ENCODE measurements at regions of chr17 and their contacts with region 1.

Region 1: DNA sequence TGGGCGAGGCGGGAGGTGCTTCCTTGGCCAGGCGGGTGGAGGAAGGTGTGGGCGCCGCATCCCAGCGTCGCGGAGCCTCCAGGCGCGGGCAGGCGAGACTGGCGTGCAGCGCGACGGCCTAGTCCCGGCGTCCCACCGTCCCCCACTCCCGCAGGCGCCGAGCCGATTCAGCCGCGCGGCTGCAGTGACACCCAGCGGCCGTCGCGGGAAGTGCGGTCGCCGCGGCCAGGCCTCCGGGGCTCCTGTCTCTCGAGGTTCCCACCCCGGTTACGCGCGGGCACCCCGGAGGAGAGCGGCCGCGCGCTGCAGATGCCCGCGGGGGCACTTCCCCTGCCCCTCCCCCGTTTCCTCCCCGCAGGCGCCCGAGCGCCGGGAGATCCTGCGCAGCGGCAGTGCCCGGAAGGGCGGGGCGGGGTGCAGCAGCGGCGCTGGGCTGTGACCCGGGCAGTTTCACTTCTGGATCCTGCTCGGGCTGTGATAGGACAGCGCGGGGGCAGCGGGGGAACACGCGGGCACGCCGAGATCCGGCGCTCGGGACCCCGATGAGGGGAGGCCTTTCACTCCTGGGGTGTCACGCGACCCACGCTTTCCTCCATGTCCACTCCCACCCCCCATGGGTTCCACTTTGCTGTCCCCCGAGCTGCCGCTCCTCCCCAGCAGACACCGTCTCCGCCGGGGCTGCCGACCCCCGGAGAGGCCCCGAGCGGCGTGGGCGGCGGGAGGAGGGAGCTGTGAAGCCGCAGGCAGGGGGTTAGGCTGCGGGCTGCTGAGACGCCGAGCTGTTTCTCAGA is 16.6 kb downstream of the GRB7 start:
- DNase-seq: peak; percentile 98
- ATAC-seq: peak; percentile 87
- H3K4me3 Mint-ChIP-seq: peak overlapping the region; percentile 78
- H3K27ac Mint-ChIP-seq: peak overlapping the region; percentile 91
- H3K4me1 Mint-ChIP-seq: peaks cover 62% of the 10 kb centered on the region
- H3K27me3 Mint-ChIP-seq: no peaks in the 10 kb centered on the region

Region 2: DNA sequence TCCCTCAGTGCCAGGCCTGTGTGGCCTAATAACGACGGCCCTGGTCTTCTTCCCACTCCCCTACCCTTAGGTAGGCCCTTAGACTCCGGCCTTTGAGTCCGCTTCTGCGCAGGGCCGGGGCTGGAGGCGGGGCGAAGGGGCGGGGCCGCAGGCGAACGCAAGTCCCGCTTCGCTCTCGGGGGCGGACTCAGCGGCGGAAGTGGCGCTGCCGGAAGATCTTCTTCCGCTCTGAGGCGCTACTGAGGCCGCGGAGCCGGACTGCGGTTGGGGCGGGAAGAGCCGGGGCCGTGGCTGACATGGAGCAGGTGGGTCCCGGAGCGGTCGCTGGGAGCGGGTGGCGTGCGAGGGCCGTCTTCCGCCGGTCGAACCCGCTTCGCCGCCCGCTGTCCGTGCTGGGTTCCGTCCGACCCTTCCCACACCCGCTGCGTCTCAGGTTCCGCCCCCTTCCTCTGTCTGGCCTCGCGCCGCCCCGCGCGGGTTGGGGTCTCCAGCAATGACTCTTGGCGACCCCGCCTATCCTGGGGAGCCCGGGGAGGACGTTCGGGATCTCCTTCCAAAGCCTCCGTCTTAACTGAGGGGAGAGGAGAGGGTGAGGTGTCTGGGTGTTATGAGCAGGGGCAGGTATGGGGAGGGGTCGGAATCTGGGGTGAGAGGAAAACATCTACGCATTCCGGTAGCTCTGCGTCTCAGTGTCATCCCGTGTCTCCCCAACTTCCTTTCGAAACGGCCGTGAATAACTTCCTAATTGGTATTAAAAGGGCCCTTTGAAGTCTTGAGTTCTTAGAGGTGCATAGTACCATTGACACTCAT is 117.2 kb before region 1 on chr17 and contains the start of gene STARD3:
- CTCF ChIA-PET with region 1: interaction called, 13 read pairs
- DNase-seq: peak; percentile 94
- ATAC-seq: peak; percentile 91
- H3K4me3 Mint-ChIP-seq: peak within 1 kb of the TSS; percentile 90
- H3K27ac Mint-ChIP-seq: peak within 1 kb of the TSS; percentile 81
- H3K4me1 Mint-ChIP-seq: peaks cover 41% of the 10 kb centered on the region
- H3K27me3 Mint-ChIP-seq: no peaks in the 10 kb centered on the region
- total RNA-seq, gene STARD3: 70.5 to 75.7 TPM

Region 3: GRCh38 chr17:39706921-39707337 is 47.4 kb before region 1 on chr17:
- CTCF ChIA-PET with region 1: no interaction called
- DNase-seq: no peak
- ATAC-seq: no peak
- H3K4me3 Mint-ChIP-seq: no peak overlapping the region
- H3K27ac Mint-ChIP-seq: peak overlapping the region; percentile 53
- H3K4me1 Mint-ChIP-seq: peaks cover 17% of the 10 kb centered on the region
- H3K27me3 Mint-ChIP-seq: peaks cover 12% of the 10 kb centered on the region

Region 4: DNA sequence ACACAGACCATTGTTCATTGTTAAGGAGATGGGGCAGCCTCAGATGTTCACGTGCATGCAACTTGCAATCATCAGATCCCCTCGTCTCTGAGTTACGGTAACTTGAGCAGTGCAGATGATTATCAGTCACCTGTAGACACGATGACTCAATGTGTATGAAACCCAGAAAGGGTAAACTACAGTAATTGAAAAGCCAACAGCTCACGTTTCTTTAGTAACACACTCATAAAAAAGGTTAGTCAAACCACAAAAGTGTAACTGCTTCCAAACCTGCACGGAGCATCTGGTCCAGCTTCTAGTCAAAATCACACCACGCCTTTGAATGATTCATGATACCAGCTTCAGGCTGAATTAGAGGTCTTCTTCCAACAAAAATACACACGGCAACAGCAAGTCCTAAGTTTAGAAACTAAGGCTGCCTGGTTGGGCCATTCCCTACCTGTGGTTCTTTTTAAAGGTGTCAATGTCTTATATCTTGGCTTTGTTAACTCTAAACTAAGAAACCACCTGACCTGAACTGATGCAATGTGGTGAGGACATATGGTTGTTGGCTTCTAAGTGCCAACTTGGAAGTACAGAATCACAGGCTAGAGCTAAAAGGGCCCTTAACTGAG is 15.7 kb after region 1 on chr17:
- CTCF ChIA-PET with region 1: interaction called, 10 read pairs
- DNase-seq: peak; percentile 81
- ATAC-seq: peak; percentile 81
- H3K4me3 Mint-ChIP-seq: peak overlapping the region; percentile 4
- H3K27ac Mint-ChIP-seq: peak overlapping the region; percentile 81
- H3K4me1 Mint-ChIP-seq: peaks cover 93% of the 10 kb centered on the region
- H3K27me3 Mint-ChIP-seq: no peaks in the 10 kb centered on the region

Region 5: GRCh38 chr17:39777534-39778365 is 23.4 kb after region 1 on chr17:
- CTCF ChIA-PET with region 1: interaction called, 30 read pairs
- DNase-seq: no peak
- ATAC-seq: peak; percentile 50
- H3K4me3 Mint-ChIP-seq: peak overlapping the region; percentile 89
- H3K27ac Mint-ChIP-seq: peak overlapping the region; percentile 92
- H3K4me1 Mint-ChIP-seq: peaks cover 81% of the 10 kb centered on the region
- H3K27me3 Mint-ChIP-seq: no peaks in the 10 kb centered on the region

Region 6: DNA sequence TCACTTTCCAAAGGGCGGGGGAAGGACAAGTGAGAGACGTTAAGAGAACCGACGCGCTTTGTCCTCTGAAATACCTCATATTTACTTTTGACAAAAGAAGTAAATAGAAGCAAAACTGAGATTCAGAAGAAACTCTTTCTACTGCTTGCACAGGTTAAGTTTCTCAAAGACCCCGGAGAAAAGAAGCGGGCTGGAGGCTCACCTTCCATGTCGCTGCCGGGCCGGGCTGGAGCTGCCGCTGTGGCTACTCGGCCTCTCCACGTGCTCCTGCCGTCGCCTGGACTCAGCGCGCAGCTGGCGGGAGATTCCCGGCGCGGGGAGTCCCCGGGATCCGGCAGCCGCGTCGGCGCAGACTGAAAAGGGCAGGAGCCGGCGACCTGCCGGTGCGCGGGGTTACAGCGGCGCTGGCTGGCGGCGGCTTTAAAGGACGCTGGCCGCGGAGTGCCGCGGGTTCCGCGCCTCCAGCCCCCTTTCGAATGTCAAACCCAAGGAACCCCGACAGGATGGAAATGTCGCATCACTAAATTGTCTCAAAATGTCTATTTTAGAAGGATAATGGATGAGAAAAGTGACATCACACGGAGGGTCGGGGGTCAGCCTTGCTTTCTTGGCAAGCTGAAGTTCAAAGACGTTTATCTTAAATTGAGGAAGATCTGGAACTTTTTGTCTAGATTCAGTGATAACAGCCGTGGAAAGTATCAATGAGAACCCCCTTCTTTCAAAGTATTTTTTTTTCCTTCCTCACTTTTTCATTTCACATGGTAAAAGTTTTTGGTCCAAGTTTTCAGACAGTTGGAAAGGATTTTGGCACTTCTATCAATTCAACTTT is 109.8 kb after region 1 on chr17 and contains the start of gene IKZF3:
- CTCF ChIA-PET with region 1: interaction called, 14 read pairs
- DNase-seq: peak; percentile 87
- ATAC-seq: peak; percentile 60
- H3K4me3 Mint-ChIP-seq: peak within 1 kb of the TSS; percentile 81
- H3K27ac Mint-ChIP-seq: peak within 1 kb of the TSS; percentile 94
- H3K4me1 Mint-ChIP-seq: peaks cover 58% of the 10 kb centered on the region
- H3K27me3 Mint-ChIP-seq: peaks cover 4% of the 10 kb centered on the region
- total RNA-seq, gene IKZF3: 70.8 to 119 TPM

Region 7: DNA sequence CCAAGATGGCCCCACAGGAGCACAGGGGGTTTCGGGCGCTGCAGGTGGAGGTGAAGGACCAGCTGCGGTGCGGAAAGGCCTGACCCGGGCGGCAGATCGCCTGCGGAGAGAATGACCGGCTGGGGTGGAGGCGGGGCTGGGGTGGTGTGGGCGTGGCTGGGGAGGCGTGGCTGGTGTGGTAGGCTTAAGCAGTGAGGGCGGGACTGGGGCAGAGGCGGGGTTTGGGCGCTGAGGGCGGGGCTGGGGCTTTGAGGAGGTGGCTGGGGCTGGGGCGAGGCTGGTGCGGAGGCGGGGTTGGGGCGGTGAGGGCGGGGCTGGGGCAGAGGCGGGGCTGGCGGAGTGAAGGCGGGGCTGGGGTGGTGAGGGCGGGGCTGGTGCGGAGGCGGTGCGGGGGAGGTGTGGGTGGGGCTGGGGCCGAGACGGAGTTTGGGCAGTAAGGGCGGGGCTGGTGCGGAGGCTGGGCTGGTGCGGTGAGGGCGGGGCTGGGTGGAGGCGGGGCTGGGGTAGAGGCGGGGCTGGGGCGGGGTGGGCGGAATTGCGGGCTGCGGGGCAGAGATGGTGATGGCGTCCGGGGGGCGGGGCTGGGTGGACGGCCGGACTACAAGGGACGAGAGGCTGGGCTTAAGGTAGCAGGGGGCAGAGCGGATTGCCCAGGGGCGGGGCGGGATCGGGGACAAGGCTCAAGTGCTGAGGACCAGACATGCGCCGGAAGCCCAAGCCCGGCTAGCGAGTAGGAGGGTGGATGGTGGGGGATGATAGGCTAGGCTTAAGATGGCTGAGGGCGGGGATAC is 198.5 kb after region 1 on chr17:
- CTCF ChIA-PET with region 1: no interaction called
- DNase-seq: peak; percentile 99
- ATAC-seq: peak; percentile 86
- H3K4me3 Mint-ChIP-seq: peak overlapping the region; percentile 76
- H3K27ac Mint-ChIP-seq: peak overlapping the region; percentile 82
- H3K4me1 Mint-ChIP-seq: peaks cover 18% of the 10 kb centered on the region
- H3K27me3 Mint-ChIP-seq: peaks cover 10% of the 10 kb centered on the region

Measured in activated CD8-positive, alpha-beta memory T cell treated with anti-CD3 and anti-CD28 coated beads, Interleukin-2, amount 10 ng/mL, durations not matched to agents 7 days and 5 days (primary cell).